B cell (primary cell): ENCODE measurements at regions of chr3 and their contacts with region 1.

Region 1: DNA sequence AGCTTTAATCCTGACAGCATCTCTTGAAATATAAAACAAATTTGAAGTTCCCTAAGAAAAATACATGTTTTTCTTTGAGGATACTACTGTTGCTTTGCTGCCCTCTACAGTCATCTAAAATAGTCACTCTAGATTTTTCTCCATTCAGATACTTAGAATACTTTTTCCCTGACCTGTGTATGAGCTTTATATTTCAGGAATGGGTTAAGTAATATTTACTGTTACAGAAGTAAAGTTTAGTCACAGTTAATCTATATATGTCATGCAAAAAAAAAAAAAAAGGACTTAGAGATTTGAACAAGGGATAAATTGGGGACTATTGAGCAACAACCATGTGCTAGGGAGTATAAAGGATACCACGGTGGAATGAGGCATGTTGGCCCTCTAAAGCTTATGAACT is 8.8 kb downstream of the NECTIN3 start:
- DNase-seq: no peak
- ATAC-seq: no peak
- H3K4me3 ChIP-seq: no peak overlapping the region
- H3K4me3 Mint-ChIP-seq: no peak overlapping the region
- H3K27ac ChIP-seq: no peak overlapping the region
- H3K27ac Mint-ChIP-seq: no peak overlapping the region
- H3K4me1 ChIP-seq: no peaks in the 10 kb centered on the region
- H3K4me1 Mint-ChIP-seq: no peaks in the 10 kb centered on the region
- H3K27me3 ChIP-seq: peaks cover 0 to 11% (median 7%) of the 10 kb centered on the region in 4 experiments
- H3K27me3 Mint-ChIP-seq: peaks cover 16% of the 10 kb centered on the region
- CTCF ChIP-seq: peak; percentile 41

Region 2: DNA sequence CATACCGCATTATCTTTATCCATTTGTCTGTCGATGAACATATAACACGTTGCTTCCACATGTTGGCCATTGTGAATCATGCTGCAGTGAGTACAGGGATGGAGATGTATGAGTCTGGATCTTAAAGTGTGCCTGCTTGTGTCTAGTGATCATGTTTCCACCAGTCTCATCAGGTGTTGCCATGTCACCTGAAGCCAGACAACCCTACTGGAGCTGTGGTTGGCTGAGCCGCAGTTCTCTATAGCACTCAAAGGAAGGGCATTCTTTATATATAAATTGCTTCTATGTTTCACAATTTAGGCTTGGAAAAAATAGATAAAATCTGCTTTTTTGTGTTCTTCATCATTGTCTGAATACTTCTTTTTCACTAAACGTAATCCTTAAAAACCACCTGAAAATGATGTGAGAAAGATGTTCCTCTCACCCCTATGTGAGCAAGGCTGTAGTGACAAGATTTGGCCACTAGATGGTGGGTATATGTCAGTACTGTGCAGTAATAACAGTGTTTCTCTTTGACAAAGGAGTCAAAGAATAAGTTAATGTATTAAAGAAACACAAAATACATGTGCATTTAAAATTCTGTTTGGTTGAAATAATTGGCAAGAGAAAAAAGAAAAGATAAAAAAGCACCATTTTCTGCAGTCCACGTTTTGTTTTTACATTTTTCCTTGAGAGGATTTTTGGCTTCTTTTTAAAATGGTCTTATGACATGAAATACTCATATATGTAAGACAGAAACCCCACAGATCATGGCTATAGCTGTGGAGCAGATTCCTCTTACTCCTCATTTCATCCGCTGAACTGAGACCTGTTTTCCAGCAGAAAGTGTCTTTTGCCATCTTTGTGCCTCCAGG is 1348.6 kb before region 1 on chr3:
- CTCF ChIA-PET with region 1: no interaction called
- POLR2A ChIA-PET with region 1: no interaction called
- intact Hi-C with region 1: loop called (anchors 10 kb)
- DNase-seq: peak; percentile 47
- ATAC-seq: peak; percentile 63
- H3K4me3 ChIP-seq: no peak overlapping the region
- H3K4me3 Mint-ChIP-seq: no peak overlapping the region
- H3K27ac ChIP-seq: no peak overlapping the region
- H3K27ac Mint-ChIP-seq: no peak overlapping the region
- H3K4me1 ChIP-seq: no peaks in the 10 kb centered on the region
- H3K4me1 Mint-ChIP-seq: no peaks in the 10 kb centered on the region
- H3K27me3 ChIP-seq: no peaks in the 10 kb centered on the region
- H3K27me3 Mint-ChIP-seq: no peaks in the 10 kb centered on the region
- CTCF ChIP-seq: peak; percentile 85

Region 3: GRCh38 chr3:110869736-110870135 is 210.7 kb before region 1 on chr3:
- CTCF ChIA-PET with region 1: no interaction called
- POLR2A ChIA-PET with region 1: no interaction called
- intact Hi-C with region 1: no loop called
- DNase-seq: no peak
- ATAC-seq: no peak
- H3K4me3 ChIP-seq: no peak overlapping the region
- H3K4me3 Mint-ChIP-seq: no peak overlapping the region
- H3K27ac ChIP-seq: no peak overlapping the region
- H3K27ac Mint-ChIP-seq: no peak overlapping the region
- H3K4me1 ChIP-seq: no peaks in the 10 kb centered on the region
- H3K4me1 Mint-ChIP-seq: no peaks in the 10 kb centered on the region
- H3K27me3 ChIP-seq: no peaks in the 10 kb centered on the region
- H3K27me3 Mint-ChIP-seq: no peaks in the 10 kb centered on the region
- CTCF ChIP-seq: no peak